Mammary epithelial cell (primary cell): ENCODE measurements at regions of chr20 and their contacts with region 1.

Region 1: DNA sequence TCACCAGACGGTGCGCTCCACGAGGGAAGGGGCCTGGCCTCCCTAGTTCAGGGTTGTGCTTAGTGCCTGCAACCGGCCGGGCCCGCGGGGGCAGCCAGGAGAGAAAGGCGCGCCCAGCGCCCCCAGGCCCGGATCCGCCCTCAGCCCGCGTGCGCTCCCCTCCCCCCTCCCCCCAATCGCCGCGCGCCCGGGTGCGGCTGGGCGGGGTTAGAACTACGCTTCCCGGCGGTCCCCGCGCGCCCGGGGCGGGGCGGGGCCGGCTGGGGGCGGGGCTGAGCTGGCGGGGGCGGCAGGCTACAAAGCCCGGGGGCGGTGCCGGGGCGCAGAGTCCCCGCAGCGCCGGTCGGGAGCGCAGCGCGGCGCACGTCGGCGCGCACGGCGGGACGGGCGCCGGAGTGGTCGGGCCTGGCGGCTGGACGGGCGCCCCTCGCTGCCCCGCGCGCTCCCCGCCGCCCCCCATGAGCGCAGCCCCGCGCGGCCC is at the start of gene RBM38:
- DNase-seq: peak; percentile 34
- H3K4me3 ChIP-seq: peak within 1 kb of the TSS; percentile 68 to 80 (median 73)
- H3K27ac ChIP-seq: no peak within 1 kb of the TSS
- H3K4me1 ChIP-seq: peaks cover 38% of the 10 kb centered on the region
- H3K27me3 ChIP-seq: no peaks in the 10 kb centered on the region
- CTCF ChIP-seq: no peak
- total RNA-seq, gene RBM38: 16.2 to 21.2 TPM

Region 2: DNA sequence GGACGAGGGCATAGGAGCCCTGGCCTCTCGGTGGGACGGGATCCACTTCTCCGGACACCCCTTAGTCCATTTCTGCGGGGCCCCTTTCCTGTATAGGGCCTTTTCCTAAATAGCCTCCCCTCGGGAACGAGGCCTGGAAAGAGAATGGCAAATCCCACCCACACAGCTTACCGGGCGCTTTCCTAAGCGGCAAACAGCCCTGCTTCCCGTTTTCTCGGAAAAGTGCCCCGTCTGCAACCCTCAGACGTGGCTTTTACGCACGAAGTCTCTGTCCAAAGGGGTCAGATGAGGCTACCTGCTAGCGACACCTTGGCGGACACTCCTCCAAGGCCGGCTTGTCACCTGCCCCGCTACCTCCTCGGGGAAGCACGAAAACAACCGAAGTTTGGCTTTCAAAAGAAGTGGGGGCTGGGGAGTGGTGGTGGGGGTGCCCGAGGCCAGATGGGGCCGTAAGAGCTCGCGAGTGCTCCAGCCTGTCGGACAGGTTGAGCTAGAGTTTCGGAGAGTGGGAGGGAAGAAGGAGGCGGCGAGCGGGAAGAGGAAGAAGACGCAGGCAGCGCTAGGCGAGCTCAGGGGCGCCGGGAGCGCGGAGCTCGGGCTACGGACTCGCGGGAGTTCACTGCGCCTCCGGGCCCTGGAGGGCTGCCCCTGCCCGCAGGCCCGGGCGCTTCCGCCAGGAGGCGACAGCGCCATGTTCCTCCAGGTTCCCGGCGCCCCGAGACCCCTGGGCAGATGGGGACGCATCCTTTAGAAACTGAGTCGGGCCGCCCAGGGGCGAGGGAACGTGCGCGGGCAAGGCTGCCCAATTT is 761.2 kb before region 1 on chr20:
- CTCF ChIA-PET with region 1: no interaction called
- dilution Hi-C with region 1: no loop called
- in situ Hi-C with region 1: no loop called
- intact Hi-C with region 1: no loop called
- DNase-seq: peak; percentile 95
- H3K4me3 ChIP-seq: peak overlapping the region; percentile 58 to 95 (median 64)
- H3K27ac ChIP-seq: peak overlapping the region; percentile 81
- H3K4me1 ChIP-seq: peaks cover 32% of the 10 kb centered on the region
- H3K27me3 ChIP-seq: peaks cover 2% of the 10 kb centered on the region
- CTCF ChIP-seq: peak; percentile 61 to 89

Region 3: DNA sequence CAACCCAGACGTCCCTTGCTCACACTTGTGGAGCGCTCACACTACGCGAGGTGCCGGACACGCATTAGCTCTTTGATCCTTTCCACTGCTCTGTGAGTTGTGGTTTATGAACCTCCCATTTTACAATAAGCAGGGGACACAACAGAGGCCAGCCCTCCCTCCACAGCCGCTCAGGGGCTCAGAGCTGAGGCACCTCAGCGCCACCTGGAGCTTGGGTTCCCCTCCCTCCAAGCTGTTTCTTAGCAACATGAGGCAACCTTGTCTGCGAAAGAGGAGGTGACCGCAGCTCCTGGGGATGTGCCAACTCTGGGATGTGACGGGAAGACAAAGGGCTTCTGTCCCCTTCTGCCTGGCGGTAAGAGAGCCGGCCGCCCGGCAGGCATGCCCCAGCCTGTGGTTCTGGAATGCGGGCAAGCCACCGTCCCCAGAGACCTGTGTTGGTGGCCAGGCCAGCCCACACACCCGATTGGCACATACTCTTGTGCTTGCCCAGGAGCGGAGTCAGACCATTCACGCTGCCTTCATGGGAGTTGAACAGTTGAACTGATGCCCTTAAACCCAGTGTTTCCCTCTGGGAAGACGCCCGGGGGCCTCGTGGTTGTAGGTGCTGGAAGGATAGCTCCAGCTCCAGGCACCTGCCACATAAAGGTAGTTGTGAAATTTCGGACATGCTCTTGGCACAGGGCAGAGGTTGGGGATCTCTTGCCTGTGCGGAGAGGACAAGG is 44.5 kb after region 1 on chr20:
- CTCF ChIA-PET with region 1: no interaction called
- dilution Hi-C with region 1: no loop called
- in situ Hi-C with region 1: no loop called
- intact Hi-C with region 1: loop called (anchors 2 kb)
- DNase-seq: peak; percentile 98
- H3K4me3 ChIP-seq: no peak overlapping the region
- H3K27ac ChIP-seq: peak overlapping the region; percentile 35
- H3K4me1 ChIP-seq: peaks cover 22% of the 10 kb centered on the region
- H3K27me3 ChIP-seq: no peaks in the 10 kb centered on the region
- CTCF ChIP-seq: peak in 1 of 2 donors; percentile 35

Region 4: DNA sequence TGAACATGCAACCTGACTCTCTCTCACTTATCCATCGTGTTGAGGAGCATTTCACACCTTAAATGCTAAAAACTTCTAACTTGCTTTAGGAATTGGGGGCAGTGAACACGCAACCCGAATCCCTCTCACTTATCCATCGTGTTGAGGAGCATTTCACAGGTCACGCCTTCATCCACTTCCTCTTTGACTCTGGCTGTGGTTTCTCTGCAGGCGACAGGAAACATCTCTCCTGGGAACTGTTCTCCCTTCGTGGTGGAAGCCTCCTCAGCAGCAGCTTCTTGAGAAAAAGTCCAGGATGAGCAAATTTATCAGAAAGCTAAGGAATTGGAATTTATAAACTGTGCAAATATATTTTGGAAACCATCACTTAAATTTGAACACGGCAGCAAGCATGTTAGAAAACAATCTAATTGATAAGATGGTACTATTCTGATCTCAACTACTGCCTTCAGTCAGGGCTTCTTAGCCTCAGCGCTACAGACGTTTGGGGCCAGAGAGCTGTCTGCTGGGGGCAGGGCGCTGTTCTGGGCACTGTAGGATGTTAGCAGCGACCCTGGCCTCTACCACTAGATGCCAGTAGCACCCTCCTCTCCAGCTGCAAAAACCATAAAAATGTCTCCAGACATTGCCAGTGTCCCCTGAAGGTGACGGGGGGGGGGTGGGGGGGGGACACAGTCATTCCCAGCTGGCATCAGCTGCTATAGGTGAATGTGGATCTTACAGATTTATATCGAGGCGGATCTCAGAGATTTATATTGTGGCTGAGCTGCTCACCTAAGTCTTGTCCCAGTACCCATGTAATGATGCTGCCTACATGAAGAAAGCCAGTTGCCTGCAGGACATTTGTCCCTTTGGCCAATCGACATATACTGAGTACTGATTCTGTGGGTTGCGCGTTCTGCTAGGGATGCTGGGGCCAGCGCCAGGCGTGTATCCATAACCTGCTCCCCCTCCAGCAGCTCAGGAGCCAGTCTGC is 107.6 kb after region 1 on chr20:
- CTCF ChIA-PET with region 1: no interaction called
- dilution Hi-C with region 1: no loop called
- in situ Hi-C with region 1: loop called in 1 of 2 experiments (anchors 5 kb)
- intact Hi-C with region 1: no loop called
- DNase-seq: no peak
- H3K4me3 ChIP-seq: no peak overlapping the region
- H3K27ac ChIP-seq: no peak overlapping the region
- H3K4me1 ChIP-seq: peaks cover 3% of the 10 kb centered on the region
- H3K27me3 ChIP-seq: no peaks in the 10 kb centered on the region
- CTCF ChIP-seq: peak; percentile 15 to 43

Region 5: GRCh38 chr20:57596998-57597939 is 206.2 kb after region 1 on chr20:
- CTCF ChIA-PET with region 1: no interaction called
- dilution Hi-C with region 1: no loop called
- in situ Hi-C with region 1: no loop called
- intact Hi-C with region 1: loop called (anchors 10 kb)
- DNase-seq: peak; percentile 24
- H3K4me3 ChIP-seq: no peak overlapping the region
- H3K27ac ChIP-seq: no peak overlapping the region
- H3K4me1 ChIP-seq: peaks cover 9% of the 10 kb centered on the region
- H3K27me3 ChIP-seq: no peaks in the 10 kb centered on the region
- CTCF ChIP-seq: peak; percentile 62 to 87

Region 6: GRCh38 chr20:57698117-57698866 is 307.2 kb after region 1 on chr20:
- CTCF ChIA-PET with region 1: no interaction called
- dilution Hi-C with region 1: no loop called
- in situ Hi-C with region 1: no loop called
- intact Hi-C with region 1: loop called (anchors 10 kb)
- DNase-seq: peak; percentile 99
- H3K4me3 ChIP-seq: peak overlapping the region in 1 of 3 experiments; percentile 24
- H3K27ac ChIP-seq: peak overlapping the region; percentile 90
- H3K4me1 ChIP-seq: peaks cover 92% of the 10 kb centered on the region
- H3K27me3 ChIP-seq: no peaks in the 10 kb centered on the region
- CTCF ChIP-seq: no peak